B cell (primary cell): ENCODE measurements at regions of chr12 and their contacts with region 1.

Region 1: GRCh38 chr12:7018350-7019042 is at the start of gene LPCAT3:
- DNase-seq: peak; percentile 98
- ATAC-seq: peak; percentile 93
- H3K4me3 ChIP-seq: peak within 1 kb of the TSS; percentile 71 to 92 (median 81)
- H3K4me3 Mint-ChIP-seq: peak within 1 kb of the TSS; percentile 88
- H3K27ac ChIP-seq: peak within 1 kb of the TSS; percentile 71 to 78
- H3K27ac Mint-ChIP-seq: peak within 1 kb of the TSS; percentile 69
- H3K4me1 ChIP-seq: peaks cover 7 to 17% of the 10 kb centered on the region in 2 donors
- H3K4me1 Mint-ChIP-seq: peaks cover 18% of the 10 kb centered on the region
- H3K27me3 ChIP-seq: no peaks in the 10 kb centered on the region
- H3K27me3 Mint-ChIP-seq: no peaks in the 10 kb centered on the region
- CTCF ChIP-seq: peak; percentile 88
- total RNA-seq, gene LPCAT3: 26.2 and 26.3 TPM in 2 replicates

Region 2: GRCh38 chr12:6363611-6364328 is 654.7 kb before region 1 on chr12:
- CTCF ChIA-PET with region 1: no interaction called
- POLR2A ChIA-PET with region 1: no interaction called
- intact Hi-C with region 1: no loop called
- DNase-seq: no peak
- ATAC-seq: peak; percentile 38
- H3K4me3 ChIP-seq: peak overlapping the region in 4 of 5 experiments; percentile 34 to 73 (median 59)
- H3K4me3 Mint-ChIP-seq: peak overlapping the region; percentile 71
- H3K27ac ChIP-seq: no peak overlapping the region
- H3K27ac Mint-ChIP-seq: no peak overlapping the region
- H3K4me1 ChIP-seq: peaks cover 17 to 20% of the 10 kb centered on the region in 2 donors
- H3K4me1 Mint-ChIP-seq: peaks cover 15% of the 10 kb centered on the region
- H3K27me3 ChIP-seq: peaks cover 0 to 41% (median 10%) of the 10 kb centered on the region in 4 experiments
- H3K27me3 Mint-ChIP-seq: peaks cover 32% of the 10 kb centered on the region
- CTCF ChIP-seq: no peak

Region 3: DNA sequence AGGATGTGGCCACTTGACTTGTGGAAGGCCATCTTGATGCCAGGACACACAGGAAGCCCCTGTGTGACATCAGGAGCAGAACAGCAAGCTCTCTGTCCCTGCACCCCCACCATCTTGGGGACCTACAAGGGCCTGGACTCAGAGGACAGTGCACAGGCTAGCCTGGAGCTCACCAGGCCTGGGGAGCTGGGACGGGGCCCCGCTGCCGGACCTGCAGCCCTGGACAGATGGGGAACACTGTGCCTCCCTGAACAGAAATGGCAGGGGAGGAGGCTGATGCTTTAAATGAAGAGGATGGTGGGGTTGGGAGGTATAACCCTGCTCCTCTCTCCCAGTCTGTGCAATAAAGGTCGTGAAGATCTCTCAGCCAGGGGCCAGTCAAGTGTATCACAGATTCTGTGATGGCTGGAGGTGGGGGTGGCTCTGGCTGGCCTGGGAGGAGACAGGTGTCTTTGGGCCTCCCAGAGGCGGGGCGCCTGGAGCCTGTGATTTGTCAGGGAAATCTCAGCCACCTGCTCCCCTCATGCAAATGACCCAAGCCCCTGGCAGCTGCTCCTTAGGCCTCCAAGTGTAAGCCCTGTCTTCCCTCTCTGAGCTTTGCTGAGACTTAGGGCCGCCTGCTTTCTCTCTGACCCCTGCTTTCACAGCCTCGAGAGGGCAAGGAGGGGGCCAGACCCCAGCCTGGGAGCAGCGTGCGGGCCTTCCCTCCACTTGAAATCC is 178.9 kb before region 1 on chr12:
- CTCF ChIA-PET with region 1: no interaction called
- POLR2A ChIA-PET with region 1: no interaction called
- intact Hi-C with region 1: no loop called
- DNase-seq: peak; percentile 69
- ATAC-seq: peak; percentile 77
- H3K4me3 ChIP-seq: no peak overlapping the region
- H3K4me3 Mint-ChIP-seq: peak overlapping the region; percentile 34
- H3K27ac ChIP-seq: peak overlapping the region in 1 of 2 donors; percentile 24
- H3K27ac Mint-ChIP-seq: peak overlapping the region; percentile 61
- H3K4me1 ChIP-seq: peaks cover 0 to 24% of the 10 kb centered on the region in 2 donors
- H3K4me1 Mint-ChIP-seq: peaks cover 17% of the 10 kb centered on the region
- H3K27me3 ChIP-seq: peaks cover 0 to 9% (median 0%) of the 10 kb centered on the region in 4 experiments
- H3K27me3 Mint-ChIP-seq: no peaks in the 10 kb centered on the region
- CTCF ChIP-seq: no peak

Region 4: GRCh38 chr12:6867413-6868210 is 150.9 kb before region 1 on chr12 and contains the start of gene TPI1:
- CTCF ChIA-PET with region 1: interaction called, 8 read pairs
- POLR2A ChIA-PET with region 1: no interaction called
- intact Hi-C with region 1: loop called (anchors 1 kb)
- DNase-seq: peak; percentile 83
- ATAC-seq: peak; percentile 83
- H3K4me3 ChIP-seq: peak within 1 kb of the TSS; percentile 56 to 88 (median 68)
- H3K4me3 Mint-ChIP-seq: peak within 1 kb of the TSS; percentile 96
- H3K27ac ChIP-seq: peak within 1 kb of the TSS; percentile 70 to 77
- H3K27ac Mint-ChIP-seq: peak within 1 kb of the TSS; percentile 97
- H3K4me1 ChIP-seq: peaks cover 33 to 41% of the 10 kb centered on the region in 2 donors
- H3K4me1 Mint-ChIP-seq: peaks cover 50% of the 10 kb centered on the region
- H3K27me3 ChIP-seq: no peaks in the 10 kb centered on the region
- H3K27me3 Mint-ChIP-seq: no peaks in the 10 kb centered on the region
- CTCF ChIP-seq: no peak
- total RNA-seq, gene TPI1: 178 and 181 TPM in 2 replicates

Region 5: GRCh38 chr12:6927379-6928024 is 91.0 kb before region 1 on chr12 and contains the start of gene ATN1:
- CTCF ChIA-PET with region 1: interaction called, 12 read pairs
- POLR2A ChIA-PET with region 1: no interaction called
- intact Hi-C with region 1: loop called (anchors 2 kb)
- DNase-seq: peak; percentile 71
- ATAC-seq: peak; percentile 44
- H3K4me3 ChIP-seq: peak within 1 kb of the TSS; percentile 15 to 86 (median 83)
- H3K4me3 Mint-ChIP-seq: peak within 1 kb of the TSS; percentile 88
- H3K27ac ChIP-seq: peak within 1 kb of the TSS; percentile 69 to 84
- H3K27ac Mint-ChIP-seq: peak within 1 kb of the TSS; percentile 97
- H3K4me1 ChIP-seq: peaks cover 36 to 51% of the 10 kb centered on the region in 2 donors
- H3K4me1 Mint-ChIP-seq: peaks cover 56% of the 10 kb centered on the region
- H3K27me3 ChIP-seq: no peaks in the 10 kb centered on the region
- H3K27me3 Mint-ChIP-seq: no peaks in the 10 kb centered on the region
- CTCF ChIP-seq: no peak
- total RNA-seq, gene ATN1: 49.5 and 50.8 TPM in 2 replicates

Region 6: GRCh38 chr12:6944381-6945186 is 73.9 kb before region 1 on chr12:
- CTCF ChIA-PET with region 1: interaction called, 11 read pairs
- POLR2A ChIA-PET with region 1: interaction called, 5 read pairs
- intact Hi-C with region 1: loop called (anchors 2 kb)
- DNase-seq: peak; percentile 91
- ATAC-seq: peak; percentile 46
- H3K4me3 ChIP-seq: peak overlapping the region; percentile 25 to 92 (median 80)
- H3K4me3 Mint-ChIP-seq: peak overlapping the region; percentile 97
- H3K27ac ChIP-seq: peak overlapping the region; percentile 93 to 99
- H3K27ac Mint-ChIP-seq: peak overlapping the region; percentile 97
- H3K4me1 ChIP-seq: peaks cover 56 to 73% of the 10 kb centered on the region in 2 donors
- H3K4me1 Mint-ChIP-seq: peaks cover 63% of the 10 kb centered on the region
- H3K27me3 ChIP-seq: no peaks in the 10 kb centered on the region
- H3K27me3 Mint-ChIP-seq: no peaks in the 10 kb centered on the region
- CTCF ChIP-seq: peak; percentile 90

Region 7: DNA sequence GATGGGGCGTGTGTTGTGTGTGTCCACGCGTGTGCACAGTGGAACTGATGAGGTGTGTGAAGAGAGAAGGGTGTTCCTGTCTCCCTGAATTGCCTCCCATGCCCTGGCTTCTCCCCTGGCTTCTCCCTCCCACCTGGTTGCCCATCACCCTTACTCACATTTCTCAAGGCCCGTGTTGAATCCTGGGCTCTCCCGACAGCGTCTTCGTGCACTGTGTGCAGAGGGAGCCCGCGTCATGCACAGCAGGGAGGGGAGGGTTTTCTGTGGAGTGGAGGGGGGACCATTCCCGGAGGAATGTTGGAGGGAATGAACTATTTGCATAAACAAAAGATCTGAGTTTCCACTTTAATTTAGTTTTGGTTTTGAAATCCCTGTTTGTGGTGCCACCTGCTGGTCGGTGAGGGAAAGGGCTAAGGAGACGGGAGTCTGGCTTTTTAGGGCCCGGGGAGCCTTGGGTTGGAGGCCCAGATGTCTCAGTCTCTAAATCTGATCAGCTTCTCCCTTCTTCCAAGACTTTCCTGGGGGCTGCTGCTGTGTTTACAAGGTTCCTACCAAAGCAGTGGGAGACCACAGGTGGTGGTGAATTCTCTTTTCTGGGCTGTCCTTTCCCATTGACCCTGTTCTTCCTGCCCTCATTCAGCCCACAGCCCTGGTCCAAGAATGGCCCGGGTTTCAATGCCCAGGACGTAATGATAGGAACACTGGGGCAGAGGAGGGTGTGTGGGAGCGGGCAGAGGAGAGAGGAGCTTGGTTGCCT is 73.9 kb after region 1 on chr12 and contains the start of gene C1R:
- CTCF ChIA-PET with region 1: interaction called, 3 read pairs
- POLR2A ChIA-PET with region 1: no interaction called
- intact Hi-C with region 1: loop called (anchors 5 kb)
- DNase-seq: peak; percentile 74
- ATAC-seq: peak; percentile 78
- H3K4me3 ChIP-seq: peak within 1 kb of the TSS; percentile 15 to 61 (median 50)
- H3K4me3 Mint-ChIP-seq: peak within 1 kb of the TSS; percentile 90
- H3K27ac ChIP-seq: no peak within 1 kb of the TSS
- H3K27ac Mint-ChIP-seq: no peak within 1 kb of the TSS
- H3K4me1 ChIP-seq: peaks cover 0 to 12% of the 10 kb centered on the region in 2 donors
- H3K4me1 Mint-ChIP-seq: peaks cover 9% of the 10 kb centered on the region
- H3K27me3 ChIP-seq: peaks cover 0 to 3% (median 0%) of the 10 kb centered on the region in 4 experiments
- H3K27me3 Mint-ChIP-seq: peaks cover 4% of the 10 kb centered on the region
- CTCF ChIP-seq: peak; percentile 88
- total RNA-seq, gene C1R: 1.2 and 2.0 TPM in 2 replicates

Region 8: GRCh38 chr12:7129872-7130680 is 111.6 kb after region 1 on chr12 and contains the start of gene CLSTN3:
- CTCF ChIA-PET with region 1: no interaction called
- POLR2A ChIA-PET with region 1: no interaction called
- intact Hi-C with region 1: loop called (anchors 1 kb)
- DNase-seq: peak; percentile 91
- ATAC-seq: peak; percentile 90
- H3K4me3 ChIP-seq: peak within 1 kb of the TSS; percentile 53 to 92 (median 75)
- H3K4me3 Mint-ChIP-seq: peak within 1 kb of the TSS; percentile 98
- H3K27ac ChIP-seq: peak within 1 kb of the TSS; percentile 10 to 54
- H3K27ac Mint-ChIP-seq: peak within 1 kb of the TSS; percentile 87
- H3K4me1 ChIP-seq: peaks cover 16 to 26% of the 10 kb centered on the region in 2 donors
- H3K4me1 Mint-ChIP-seq: peaks cover 30% of the 10 kb centered on the region
- H3K27me3 ChIP-seq: no peaks in the 10 kb centered on the region
- H3K27me3 Mint-ChIP-seq: no peaks in the 10 kb centered on the region
- CTCF ChIP-seq: no peak
- total RNA-seq, gene CLSTN3: 36.5 and 41.2 TPM in 2 replicates

Region 9: GRCh38 chr12:8941691-8942478 is 1923.4 kb after region 1 on chr12:
- CTCF ChIA-PET with region 1: no interaction called
- POLR2A ChIA-PET with region 1: no interaction called
- intact Hi-C with region 1: no loop called
- DNase-seq: no peak
- ATAC-seq: no peak
- H3K4me3 ChIP-seq: no peak overlapping the region
- H3K4me3 Mint-ChIP-seq: no peak overlapping the region
- H3K27ac ChIP-seq: no peak overlapping the region
- H3K27ac Mint-ChIP-seq: no peak overlapping the region
- H3K4me1 ChIP-seq: peaks cover 5% of the 10 kb centered on the region in 2 donors
- H3K4me1 Mint-ChIP-seq: peaks cover 9% of the 10 kb centered on the region
- H3K27me3 ChIP-seq: no peaks in the 10 kb centered on the region
- H3K27me3 Mint-ChIP-seq: no peaks in the 10 kb centered on the region
- CTCF ChIP-seq: no peak